Transverse colon (tissue), 4 donors: ENCODE measurements at regions of chr2 and their contacts with region 1.

Region 1: DNA sequence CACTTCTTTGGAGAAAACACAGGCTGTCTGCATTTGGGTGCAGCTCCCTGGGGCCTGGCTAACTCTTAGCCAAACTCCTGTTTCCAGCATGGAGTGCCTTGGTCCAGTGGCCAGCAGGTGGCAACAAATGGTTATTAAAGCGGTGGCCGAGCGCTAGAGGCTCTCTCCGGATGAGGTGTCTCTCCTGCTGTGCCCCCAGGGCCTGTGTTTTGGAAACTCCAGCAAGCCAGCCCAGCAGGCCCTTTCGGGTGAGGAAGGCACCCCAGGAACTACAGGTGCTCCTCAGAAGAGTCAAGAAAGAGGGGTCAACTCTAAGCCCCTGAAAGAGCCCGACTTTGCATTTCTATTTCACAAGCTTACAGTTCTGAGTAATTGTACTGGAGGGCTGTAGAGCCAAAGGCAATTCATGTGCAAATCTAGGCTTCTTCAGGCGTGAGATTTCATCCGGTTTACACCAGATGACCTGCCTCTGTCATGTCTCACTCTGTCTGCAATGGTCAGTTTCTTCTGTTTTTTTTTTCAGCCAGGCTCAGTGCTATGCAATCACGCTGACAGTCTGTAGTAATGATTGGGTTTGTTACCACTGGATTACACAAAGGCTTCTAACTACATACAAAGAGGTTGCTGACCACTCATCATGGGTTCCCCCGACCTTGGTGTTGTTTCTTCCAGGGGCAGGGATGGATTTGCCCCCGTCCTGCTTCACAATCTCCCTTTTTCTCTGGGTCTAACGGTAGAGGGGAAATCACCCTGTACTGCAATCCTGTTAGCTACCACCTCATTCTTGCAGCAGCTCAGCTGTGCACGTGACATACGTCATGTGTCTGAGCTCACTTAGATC is 7.6 kb upstream of the CHRNA1 start:
- DNase-seq: peak; percentile 71
- H3K4me3 ChIP-seq: no peak overlapping the region
- H3K27ac ChIP-seq: peak overlapping the region in 1 of 4 donors; percentile 16
- H3K4me1 ChIP-seq: peaks cover 0 to 6% (median 2%) of the 10 kb centered on the region in 4 donors
- H3K27me3 ChIP-seq: no peaks in the 10 kb centered on the region
- CTCF ChIP-seq: peak; percentile 64 to 76 (median 66)
- EP300 ChIP-seq: no peak
- POLR2A ChIP-seq: no peak

Region 2: DNA sequence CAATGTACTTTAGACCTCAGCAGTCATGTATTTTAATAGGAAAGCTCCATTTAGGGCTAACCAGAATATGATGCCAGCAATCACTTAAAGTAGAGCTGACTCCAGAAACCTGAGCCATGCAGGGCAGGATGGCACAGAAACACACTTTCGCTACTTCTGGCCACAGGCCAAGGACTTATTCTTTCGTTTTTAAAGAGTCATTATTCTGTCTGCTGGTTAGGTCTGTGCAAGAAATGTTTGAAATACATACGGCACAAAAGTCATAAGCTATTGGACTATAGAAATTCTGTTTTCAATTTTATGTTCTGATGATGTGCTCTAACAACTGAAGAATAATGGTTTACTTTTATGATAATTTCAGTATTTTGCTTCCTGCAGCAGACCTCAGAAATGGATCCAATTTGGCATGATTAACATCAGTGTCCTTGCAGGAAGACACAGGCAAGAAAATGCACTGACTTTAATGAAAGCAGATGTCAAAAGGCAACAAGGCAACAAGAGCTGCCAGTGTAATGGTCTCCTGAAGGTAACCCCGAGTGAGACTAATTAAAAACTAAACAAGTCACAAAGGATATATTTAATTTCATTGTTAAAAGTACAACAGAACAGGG is 106.8 kb after region 1 on chr2:
- in situ Hi-C with region 1: no loop called
- intact Hi-C with region 1: no loop called
- DNase-seq: no peak
- H3K4me3 ChIP-seq: peak overlapping the region in 3 of 4 donors; percentile 7 to 22 (median 10)
- H3K27ac ChIP-seq: no peak overlapping the region
- H3K4me1 ChIP-seq: no peaks in the 10 kb centered on the region
- H3K27me3 ChIP-seq: no peaks in the 10 kb centered on the region
- CTCF ChIP-seq: no peak
- EP300 ChIP-seq: no peak
- POLR2A ChIP-seq: no peak

Region 3: DNA sequence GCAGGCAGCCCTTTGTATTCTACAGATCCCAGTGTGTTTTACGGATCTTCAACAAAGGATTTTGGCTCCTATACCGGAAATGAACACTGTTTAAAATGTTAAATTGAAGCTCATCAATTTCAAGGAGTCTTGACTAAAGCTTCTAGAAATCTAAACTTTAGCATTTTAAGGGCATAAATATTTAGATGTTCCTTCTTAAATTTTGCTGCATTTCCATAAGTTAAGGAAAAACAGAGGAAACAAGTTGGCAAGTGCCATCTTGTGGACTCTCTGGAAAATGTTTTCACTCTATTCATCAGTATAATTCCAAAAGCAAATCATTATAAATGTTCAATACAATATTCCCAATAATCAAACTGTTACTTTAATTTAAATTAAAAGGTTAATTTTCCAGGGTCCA is 213.8 kb after region 1 on chr2:
- in situ Hi-C with region 1: loop called (anchors 10 kb)
- intact Hi-C with region 1: loop called (anchors 5 kb)
- DNase-seq: no peak
- H3K4me3 ChIP-seq: no peak overlapping the region
- H3K27ac ChIP-seq: no peak overlapping the region
- H3K4me1 ChIP-seq: no peaks in the 10 kb centered on the region
- H3K27me3 ChIP-seq: no peaks in the 10 kb centered on the region
- CTCF ChIP-seq: peak; percentile 28 to 48 (median 38)
- EP300 ChIP-seq: no peak
- POLR2A ChIP-seq: no peak

Region 4: DNA sequence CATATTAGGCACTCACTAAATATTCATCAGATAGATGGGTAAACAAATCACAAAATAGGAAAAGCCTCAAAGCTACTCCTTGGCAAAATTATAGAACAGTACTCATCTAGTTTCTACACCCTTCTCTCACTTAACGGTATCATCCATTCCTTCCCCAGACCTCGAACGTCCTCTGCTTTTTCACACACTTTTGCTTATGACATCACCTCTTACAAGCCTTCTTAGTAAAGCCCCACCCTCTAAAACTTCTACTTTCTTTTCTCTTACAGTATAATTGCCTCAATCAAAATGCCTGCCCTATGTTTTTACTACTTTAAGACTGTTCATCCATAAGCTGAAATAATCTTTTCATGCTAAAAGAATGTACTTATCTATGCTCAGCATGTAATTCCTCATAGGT is 225.3 kb after region 1 on chr2:
- in situ Hi-C with region 1: loop called in 1 of 4 experiments (anchors 10 kb)
- intact Hi-C with region 1: no loop called
- DNase-seq: no peak
- H3K4me3 ChIP-seq: no peak overlapping the region
- H3K27ac ChIP-seq: no peak overlapping the region
- H3K4me1 ChIP-seq: peaks cover 0 to 11% (median 0%) of the 10 kb centered on the region in 4 donors
- H3K27me3 ChIP-seq: peaks cover 11% of the 10 kb centered on the region
- CTCF ChIP-seq: no peak
- EP300 ChIP-seq: no peak
- POLR2A ChIP-seq: no peak